A673 (cell line): ENCODE measurements at regions of chrX and their contacts with region 1.

Region 1: DNA sequence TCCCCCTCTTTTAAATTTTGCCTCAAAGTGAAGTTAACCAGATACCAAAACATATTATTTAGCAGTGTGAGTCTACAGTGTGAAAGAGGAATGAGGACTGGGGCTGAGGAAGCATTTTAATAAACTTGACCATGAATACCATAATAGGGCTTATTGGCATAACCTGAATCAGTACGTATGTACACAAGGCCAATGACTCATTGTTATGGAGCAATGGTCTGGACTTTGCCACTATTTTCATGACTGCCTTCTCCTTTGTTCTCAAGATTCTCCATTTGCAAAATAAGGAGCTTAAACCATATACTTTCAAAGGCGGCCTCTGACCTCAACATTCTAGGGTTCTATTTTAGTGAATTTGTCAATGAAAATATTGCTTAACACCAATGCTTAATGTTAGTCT is 102.8 kb upstream of the OR13H1 start:
- DNase-seq: no peak
- H3K4me3 ChIP-seq: no peak overlapping the region
- H3K27ac ChIP-seq: no peak overlapping the region
- H3K4me1 ChIP-seq: no peaks in the 10 kb centered on the region
- H3K27me3 ChIP-seq: peaks cover 16% of the 10 kb centered on the region
- CTCF ChIP-seq: no peak

Region 2: DNA sequence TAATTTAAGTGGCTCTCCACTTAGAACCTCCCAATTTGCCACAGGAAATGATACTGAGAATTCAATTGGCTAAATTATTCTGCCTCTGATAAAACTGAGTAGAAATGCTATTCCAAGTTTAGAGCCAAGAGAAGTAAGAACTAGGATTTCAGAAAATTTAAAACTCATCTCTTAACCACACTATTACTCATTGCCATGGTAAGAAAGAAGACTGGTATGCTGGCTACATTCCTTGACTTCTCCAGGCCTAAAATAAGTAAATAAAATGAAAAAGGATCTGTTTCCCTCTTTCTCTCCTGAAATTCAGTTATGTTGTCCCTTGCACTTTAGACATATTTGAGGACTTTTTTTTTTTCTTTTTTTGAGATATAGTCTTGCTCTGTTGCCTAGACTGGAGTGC is 1195.6 kb before region 1 on chrX:
- CTCF ChIA-PET with region 1: no interaction called
- POLR2A ChIA-PET with region 1: interaction called, 10 read pairs
- intact Hi-C with region 1: no loop called
- DNase-seq: no peak
- H3K4me3 ChIP-seq: no peak overlapping the region
- H3K27ac ChIP-seq: no peak overlapping the region
- H3K4me1 ChIP-seq: no peaks in the 10 kb centered on the region
- H3K27me3 ChIP-seq: no peaks in the 10 kb centered on the region
- CTCF ChIP-seq: no peak

Region 3: GRCh38 chrX:131544218-131544617 is 103.2 kb after region 1 on chrX:
- CTCF ChIA-PET with region 1: no interaction called
- POLR2A ChIA-PET with region 1: no interaction called
- intact Hi-C with region 1: no loop called
- DNase-seq: no peak
- H3K4me3 ChIP-seq: no peak overlapping the region
- H3K27ac ChIP-seq: no peak overlapping the region
- H3K4me1 ChIP-seq: no peaks in the 10 kb centered on the region
- H3K27me3 ChIP-seq: peaks cover 6% of the 10 kb centered on the region
- CTCF ChIP-seq: no peak